ENCODE measurements at regions of chr16 and their contacts with region 1.

Region 1: DNA sequence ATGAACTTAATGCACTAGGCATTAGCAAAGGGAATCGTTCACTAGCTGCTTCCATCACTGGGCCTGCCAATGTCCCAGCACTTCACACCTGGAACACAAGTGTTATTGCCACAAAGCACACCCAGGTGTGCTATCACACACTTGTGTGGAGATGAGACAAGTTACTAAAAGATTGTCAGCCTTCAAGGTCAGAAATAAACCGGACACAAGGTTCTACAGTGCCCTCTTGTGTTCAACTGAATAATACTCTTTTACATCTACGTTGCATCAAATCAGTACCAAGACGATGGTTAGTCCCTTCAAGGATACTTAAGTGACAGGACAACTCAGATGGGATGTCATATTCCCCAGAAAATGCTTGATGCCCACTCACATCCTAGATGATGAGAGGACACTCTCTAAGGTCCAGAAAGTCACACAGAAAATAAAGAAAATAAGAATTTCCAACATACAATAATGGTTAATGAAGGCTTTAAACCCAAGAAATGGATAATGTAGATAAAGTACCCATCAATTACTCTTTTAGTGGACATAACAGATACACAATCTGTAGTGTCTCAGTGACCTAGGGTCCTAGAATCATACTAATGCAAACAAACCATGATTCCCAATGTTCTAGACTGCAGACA is 16.4 kb upstream of the GLG1 start:
- DNase-seq: no peak
- ATAC-seq: peak in 3 of 4 donors; percentile 47 to 60 (median 53)
- H3K4me3 ChIP-seq: no peak overlapping the region
- H3K27ac ChIP-seq: no peak overlapping the region
- H3K4me1 ChIP-seq: peaks cover 3 to 19% (median 19%) of the 10 kb centered on the region in 3 donors
- H3K27me3 ChIP-seq: no peaks in the 10 kb centered on the region
- CTCF ChIP-seq: peak in 2 of 4 donors; percentile 51 to 55

Region 2: GRCh38 chr16:74469946-74470478 is 153.3 kb before region 1 on chr16:
- intact Hi-C with region 1: loop called in 1 of 3 experiments (anchors 10 kb)
- DNase-seq: no peak
- ATAC-seq: no peak
- H3K4me3 ChIP-seq: no peak overlapping the region
- H3K27ac ChIP-seq: no peak overlapping the region
- H3K4me1 ChIP-seq: peaks cover 0 to 4% (median 2%) of the 10 kb centered on the region in 3 donors
- H3K27me3 ChIP-seq: no peaks in the 10 kb centered on the region
- CTCF ChIP-seq: no peak